Common myeloid progenitor, CD34-positive (primary cell): ENCODE measurements at regions of chr1 and their contacts with region 1.

Region 1: DNA sequence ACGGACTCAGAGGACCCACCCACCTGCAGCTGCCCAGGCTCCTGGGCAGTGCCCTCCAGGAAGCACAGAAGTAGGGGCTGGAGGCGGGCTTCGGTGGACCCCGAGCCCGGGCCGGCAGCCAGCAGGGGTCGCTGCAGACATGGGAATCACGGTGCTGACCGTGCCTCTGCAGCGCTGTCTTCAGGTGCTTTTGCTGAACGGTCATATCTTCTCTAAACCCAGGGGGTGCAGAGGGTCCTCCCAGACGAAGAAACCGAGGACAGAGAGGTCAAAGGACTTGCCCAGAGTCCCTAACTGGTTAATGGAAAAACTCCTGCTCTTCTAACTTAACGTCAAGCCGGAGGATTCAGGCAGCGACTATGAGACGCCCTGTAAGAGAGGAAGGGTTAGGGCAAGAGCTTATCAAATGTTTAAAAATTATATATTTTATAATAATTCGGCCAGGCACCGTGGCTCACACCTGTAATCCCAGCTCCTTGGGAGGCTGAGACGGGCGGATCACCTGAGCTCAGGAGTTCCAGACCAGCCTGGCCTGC is 21.5 kb upstream of the LEFTY2 start:
- DNase-seq: peak; percentile 50 to 65 (median 63)
- H3K4me3 ChIP-seq: peak overlapping the region in 2 of 7 experiments; percentile 19 to 30
- H3K27ac ChIP-seq: no peak overlapping the region
- H3K4me1 ChIP-seq: peaks cover 0 to 5% (median 2%) of the 10 kb centered on the region in 4 experiments
- H3K27me3 ChIP-seq: no peaks in the 10 kb centered on the region

Region 2: DNA sequence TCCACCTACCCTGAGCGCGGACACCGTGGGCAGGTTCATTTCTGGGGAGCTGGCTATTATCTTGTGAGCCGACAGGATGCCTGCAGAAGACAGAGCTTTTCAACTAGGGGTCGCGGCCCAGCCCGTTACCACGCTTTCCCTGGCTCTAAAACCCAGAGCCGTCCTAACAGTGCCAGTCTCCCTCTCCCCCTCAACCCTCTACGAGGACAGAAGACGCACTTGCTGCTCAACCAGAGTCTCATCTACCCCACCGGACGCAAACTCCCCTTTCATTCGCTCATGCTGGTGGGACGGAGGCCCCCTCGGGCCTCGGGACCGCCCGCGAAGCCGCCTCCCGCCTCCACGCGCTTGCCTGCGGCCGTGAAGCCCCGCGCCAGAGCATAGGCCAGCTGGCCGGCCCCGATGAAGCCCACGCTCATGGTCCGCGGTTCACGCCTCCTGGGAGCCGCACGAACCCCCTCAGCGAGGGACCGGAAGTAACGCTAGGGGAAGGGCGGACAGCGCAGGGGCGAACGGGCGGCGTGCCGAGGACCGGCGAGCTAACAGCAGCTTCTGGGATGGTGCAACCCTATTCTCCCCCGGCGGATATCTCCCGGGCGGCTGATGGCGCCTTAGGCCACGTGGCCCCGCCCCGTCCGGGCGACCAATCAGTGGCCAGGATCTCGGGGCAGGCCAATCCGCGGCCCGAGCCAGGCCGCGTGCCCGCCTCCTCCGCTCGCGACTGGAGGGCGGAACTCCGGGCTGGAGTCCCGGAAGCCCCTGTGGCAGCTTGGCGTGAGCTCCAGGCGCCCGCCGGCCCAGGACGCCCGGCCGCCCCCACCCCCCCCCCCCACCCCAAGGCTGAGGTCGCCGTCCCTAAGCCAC is 38.6 kb before region 1 on chr1 and contains the start of gene PYCR2:
- CTCF ChIA-PET with region 1: interaction called, 10 read pairs
- POLR2A ChIA-PET with region 1: no interaction called
- DNase-seq: peak; percentile 95 to 97 (median 97)
- H3K4me3 ChIP-seq: peak within 1 kb of the TSS; percentile 60 to 95 (median 85)
- H3K27ac ChIP-seq: peak within 1 kb of the TSS; percentile 80 to 93
- H3K4me1 ChIP-seq: peaks cover 3 to 74% (median 65%) of the 10 kb centered on the region in 4 experiments
- H3K27me3 ChIP-seq: no peaks in the 10 kb centered on the region

Region 3: GRCh38 chr1:225937048-225937968 is 25.2 kb before region 1 on chr1:
- CTCF ChIA-PET with region 1: interaction called, 16 read pairs
- POLR2A ChIA-PET with region 1: interaction called, 5 read pairs
- DNase-seq: no peak
- H3K4me3 ChIP-seq: no peak overlapping the region
- H3K27ac ChIP-seq: no peak overlapping the region
- H3K4me1 ChIP-seq: peaks cover 0 to 3% (median 1%) of the 10 kb centered on the region in 4 experiments
- H3K27me3 ChIP-seq: no peaks in the 10 kb centered on the region

Region 4: GRCh38 chr1:225944951-225945350 is 17.6 kb before region 1 on chr1:
- CTCF ChIA-PET with region 1: interaction called, 27 read pairs
- POLR2A ChIA-PET with region 1: no interaction called
- DNase-seq: peak in 2 of 3 donors; percentile 31 to 33
- H3K4me3 ChIP-seq: peak overlapping the region in 2 of 7 experiments; percentile 16 to 24
- H3K27ac ChIP-seq: no peak overlapping the region
- H3K4me1 ChIP-seq: peaks cover 2 to 12% (median 9%) of the 10 kb centered on the region in 4 experiments
- H3K27me3 ChIP-seq: no peaks in the 10 kb centered on the region

Region 5: GRCh38 chr1:225977937-225978748 is 15.6 kb after region 1 on chr1:
- CTCF ChIA-PET with region 1: interaction called, 59 read pairs
- POLR2A ChIA-PET with region 1: no interaction called
- DNase-seq: peak in 2 of 3 donors; percentile 68
- H3K4me3 ChIP-seq: peak overlapping the region in 3 of 7 experiments; percentile 34 to 57 (median 37)
- H3K27ac ChIP-seq: no peak overlapping the region
- H3K4me1 ChIP-seq: peaks cover 16 to 33% (median 29%) of the 10 kb centered on the region in 4 experiments
- H3K27me3 ChIP-seq: no peaks in the 10 kb centered on the region

Region 6: GRCh38 chr1:225987491-225988316 is 25.2 kb after region 1 on chr1:
- CTCF ChIA-PET with region 1: interaction called, 12 read pairs
- POLR2A ChIA-PET with region 1: no interaction called
- DNase-seq: peak; percentile 66 to 76 (median 74)
- H3K4me3 ChIP-seq: peak overlapping the region in 1 of 7 experiments; percentile 28
- H3K27ac ChIP-seq: no peak overlapping the region
- H3K4me1 ChIP-seq: peaks cover 0 to 4% (median 1%) of the 10 kb centered on the region in 4 experiments
- H3K27me3 ChIP-seq: no peaks in the 10 kb centered on the region